ENCODE measurements at regions of chr4 and their contacts with region 1.

Region 1: GRCh38 chr4:153541456-153542096 is 75.4 kb downstream of the TMEM131L start:
- DNase-seq: peak; percentile 78
- H3K4me3 ChIP-seq: no peak overlapping the region
- H3K27ac ChIP-seq: peak overlapping the region; percentile 63
- H3K27me3 ChIP-seq: no peaks in the 10 kb centered on the region
- CTCF ChIP-seq: peak; percentile 39

Region 2: DNA sequence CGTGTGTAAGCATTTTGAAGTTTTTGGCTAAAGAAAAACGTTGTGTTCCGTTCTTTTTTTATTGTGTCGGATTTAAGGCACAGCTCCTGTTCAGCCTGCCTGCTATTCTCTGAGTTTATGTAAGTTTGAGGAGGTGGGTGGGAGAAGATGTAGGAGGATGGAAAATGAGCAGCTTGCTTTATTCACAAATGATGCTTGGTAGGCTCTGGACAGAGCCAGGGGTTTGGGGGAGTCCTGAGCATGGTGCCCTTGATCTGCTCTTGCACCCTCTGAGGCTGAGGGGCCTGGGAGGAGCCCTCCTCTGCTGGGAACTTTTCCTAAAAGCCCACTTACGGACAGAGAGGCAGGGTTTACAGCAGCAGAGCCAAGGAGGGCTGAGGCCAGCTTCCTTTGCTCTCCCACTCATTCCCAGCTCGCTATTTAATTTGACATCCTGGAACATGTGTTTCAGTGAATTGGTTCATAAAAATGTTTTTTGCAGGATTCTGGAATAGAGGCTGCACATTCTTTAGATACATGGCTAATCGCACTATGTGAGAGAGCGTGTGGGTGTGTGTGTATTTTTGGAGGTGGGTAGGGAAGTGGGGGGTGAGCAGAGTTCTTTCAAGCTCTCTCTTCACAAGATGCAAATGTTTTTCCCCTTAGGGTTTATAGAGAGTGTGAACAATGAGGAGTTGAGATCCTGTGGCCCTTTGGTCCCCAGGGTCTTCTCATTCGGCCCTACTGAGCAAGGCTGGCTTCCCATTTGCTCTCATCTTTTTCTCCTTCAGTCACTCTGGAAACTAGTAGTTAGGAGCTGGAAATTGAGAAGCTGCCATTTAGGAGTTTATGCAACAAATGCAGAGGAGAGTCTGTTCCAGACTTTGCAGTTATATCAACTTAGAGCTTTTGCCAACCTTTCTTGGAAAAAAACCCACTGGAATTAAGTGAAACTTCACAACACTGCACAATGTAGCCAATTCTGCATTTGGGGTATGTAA is 43.3 kb before region 1 on chr4:
- CTCF ChIA-PET with region 1: no interaction called
- POLR2A ChIA-PET with region 1: interaction called, 11 read pairs
- DNase-seq: peak; percentile 66
- H3K4me3 ChIP-seq: peak overlapping the region; percentile 25
- H3K27ac ChIP-seq: peak overlapping the region; percentile 84
- H3K27me3 ChIP-seq: no peaks in the 10 kb centered on the region
- CTCF ChIP-seq: no peak

Region 3: DNA sequence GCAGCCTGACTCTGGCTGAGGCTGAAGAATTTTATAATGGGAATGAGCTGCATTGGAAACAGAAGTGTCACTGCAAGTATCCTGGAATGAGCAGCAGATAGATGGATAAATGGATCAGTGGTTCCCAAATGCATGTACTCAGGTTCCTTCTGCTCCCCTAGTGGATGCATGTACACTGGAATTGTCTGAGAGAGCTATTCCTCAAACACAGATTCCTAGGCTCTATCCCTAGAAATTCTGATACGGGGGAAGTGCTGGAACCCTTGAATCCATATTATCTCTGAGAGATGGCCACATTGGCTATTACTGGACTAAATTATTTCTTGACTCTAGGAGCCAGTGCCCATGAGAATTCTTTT is 10.6 kb before region 1 on chr4:
- CTCF ChIA-PET with region 1: interaction called, 12 read pairs
- POLR2A ChIA-PET with region 1: no interaction called
- DNase-seq: no peak
- H3K4me3 ChIP-seq: no peak overlapping the region
- H3K27ac ChIP-seq: no peak overlapping the region
- H3K27me3 ChIP-seq: no peaks in the 10 kb centered on the region
- CTCF ChIP-seq: peak; percentile 19; the same call in 1 of the 2 replicates

Region 4: GRCh38 chr4:153791746-153792617 is 250.4 kb after region 1 on chr4:
- CTCF ChIA-PET with region 1: no interaction called
- POLR2A ChIA-PET with region 1: no interaction called
- DNase-seq: no peak
- H3K4me3 ChIP-seq: no peak overlapping the region
- H3K27ac ChIP-seq: no peak overlapping the region
- H3K27me3 ChIP-seq: peaks cover 59% of the 10 kb centered on the region
- CTCF ChIP-seq: no peak